ENCODE measurements at regions of chr12 and their contacts with region 1.

Region 1: GRCh38 chr12:113174461-113175384 is 10.6 kb downstream of the DDX54 start:
- DNase-seq: peak; percentile 55 to 85 (median 76)
- ATAC-seq: peak; percentile 95
- H3K4me3 ChIP-seq: no peak overlapping the region
- H3K4me3 Mint-ChIP-seq: no peak overlapping the region
- H3K27ac ChIP-seq: no peak overlapping the region
- H3K27ac Mint-ChIP-seq: no peak overlapping the region
- H3K4me1 ChIP-seq: no peaks in the 10 kb centered on the region
- H3K4me1 Mint-ChIP-seq: peaks cover 2% of the 10 kb centered on the region
- H3K27me3 ChIP-seq: no peaks in the 10 kb centered on the region
- H3K27me3 Mint-ChIP-seq: no peaks in the 10 kb centered on the region
- CTCF ChIP-seq: peak; percentile 96

Region 2: GRCh38 chr12:112900299-112901145 is 274.2 kb before region 1 on chr12:
- CTCF ChIA-PET with region 1: interaction called, 12 read pairs
- POLR2A ChIA-PET with region 1: no interaction called
- intact Hi-C with region 1: loop called (anchors 1 to 2 kb)
- DNase-seq: peak in 6 of 9 experiments; percentile 7 to 65 (median 35)
- ATAC-seq: peak; percentile 59
- H3K4me3 ChIP-seq: no peak overlapping the region
- H3K4me3 Mint-ChIP-seq: no peak overlapping the region
- H3K27ac ChIP-seq: no peak overlapping the region
- H3K27ac Mint-ChIP-seq: no peak overlapping the region
- H3K4me1 ChIP-seq: peaks cover 4% of the 10 kb centered on the region
- H3K4me1 Mint-ChIP-seq: peaks cover 22% of the 10 kb centered on the region
- H3K27me3 ChIP-seq: no peaks in the 10 kb centered on the region
- H3K27me3 Mint-ChIP-seq: peaks cover 7% of the 10 kb centered on the region
- CTCF ChIP-seq: peak; percentile 71

Region 3: DNA sequence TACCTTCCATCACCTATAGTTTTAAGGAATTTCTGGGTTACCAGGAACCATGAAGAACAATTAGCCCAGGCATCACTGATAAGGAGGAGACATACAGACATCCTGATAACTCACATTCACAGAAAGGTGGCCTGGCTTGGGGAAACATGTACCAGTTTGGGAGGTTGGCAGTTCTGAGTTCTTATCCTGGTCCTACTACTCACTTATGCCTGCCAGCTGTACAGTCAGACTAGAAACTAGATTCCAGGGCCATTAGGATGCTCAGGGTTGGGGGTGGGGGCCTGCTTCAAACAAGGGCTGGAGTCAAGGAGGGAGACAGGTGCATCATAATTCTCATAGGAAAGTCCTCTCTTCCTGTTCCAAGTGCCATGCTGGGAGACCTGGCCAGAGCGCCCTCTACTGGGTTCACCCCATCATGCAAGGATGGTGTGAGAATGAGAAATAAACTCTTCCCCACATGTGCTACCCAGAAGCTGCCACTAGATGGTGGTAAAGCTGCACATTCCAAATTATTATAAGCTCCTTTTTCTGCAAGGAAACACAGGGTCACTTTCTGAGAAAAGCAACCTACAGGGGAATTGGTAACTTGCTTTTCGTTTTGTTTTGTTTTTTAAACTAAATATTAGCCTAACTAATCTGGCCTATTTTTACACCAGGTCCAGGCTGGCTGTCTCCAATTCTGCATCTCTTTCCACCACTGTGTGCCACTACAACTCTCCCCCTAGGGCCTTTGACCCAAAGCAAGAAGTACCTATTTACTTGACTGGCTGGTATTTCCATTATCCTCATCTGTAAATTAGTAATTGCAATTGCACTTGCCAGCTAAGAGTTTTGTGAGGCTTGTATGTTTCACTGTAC is 182.0 kb before region 1 on chr12:
- CTCF ChIA-PET with region 1: interaction called, 4 read pairs
- POLR2A ChIA-PET with region 1: no interaction called
- intact Hi-C with region 1: loop called in 1 of 2 experiments (anchors 2 kb)
- DNase-seq: peak; percentile 25 to 70 (median 46)
- ATAC-seq: peak; percentile 79
- H3K4me3 ChIP-seq: no peak overlapping the region
- H3K4me3 Mint-ChIP-seq: no peak overlapping the region
- H3K27ac ChIP-seq: no peak overlapping the region
- H3K27ac Mint-ChIP-seq: no peak overlapping the region
- H3K4me1 ChIP-seq: peaks cover 9% of the 10 kb centered on the region
- H3K4me1 Mint-ChIP-seq: peaks cover 11% of the 10 kb centered on the region
- H3K27me3 ChIP-seq: no peaks in the 10 kb centered on the region
- H3K27me3 Mint-ChIP-seq: no peaks in the 10 kb centered on the region
- CTCF ChIP-seq: peak; percentile 74

Region 4: DNA sequence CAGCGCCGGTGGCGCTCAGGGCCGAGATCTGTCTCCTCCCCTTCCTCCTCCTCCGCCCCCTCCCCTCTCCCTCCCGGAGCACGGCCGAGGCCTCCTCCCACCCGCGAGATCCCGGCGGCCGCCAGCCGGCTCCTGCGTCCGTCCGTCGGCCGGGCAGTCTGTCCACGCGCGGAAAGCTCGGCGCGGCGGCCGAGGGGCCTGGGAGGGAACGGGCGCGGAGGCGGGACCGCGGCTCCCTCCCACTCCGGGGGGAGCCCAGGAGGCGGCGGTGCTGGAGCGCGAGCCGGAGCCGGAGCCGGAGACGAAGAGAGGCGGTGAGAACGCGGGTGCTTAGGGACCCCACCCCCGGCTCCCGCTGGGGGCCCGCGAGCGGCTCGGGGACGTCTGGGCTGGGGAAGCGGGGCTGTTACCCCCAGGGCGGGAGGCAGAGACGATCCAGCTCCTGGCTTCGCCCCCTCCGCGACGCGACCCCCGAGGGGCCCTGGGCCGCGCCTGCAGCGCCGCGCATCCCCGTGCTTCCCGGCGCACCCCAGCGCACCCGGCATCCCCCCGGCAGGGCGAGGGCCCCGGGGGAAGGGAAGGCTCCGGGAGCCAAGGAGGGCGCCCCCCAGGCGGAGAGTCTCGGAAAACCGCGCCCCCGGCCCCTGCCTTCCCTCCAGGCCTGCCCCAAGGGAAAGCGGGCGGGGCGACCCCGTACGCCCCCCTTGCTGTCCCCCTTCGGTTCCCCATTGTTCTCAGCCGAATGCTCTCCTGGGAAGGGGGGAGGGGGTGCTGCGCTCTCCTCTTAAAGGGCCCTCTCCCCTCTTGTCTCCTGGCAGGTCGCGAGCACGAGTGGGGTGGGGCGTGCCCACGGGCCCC is 117.9 kb before region 1 on chr12 and contains the start of gene DTX1:
- CTCF ChIA-PET with region 1: interaction called, 12 read pairs
- POLR2A ChIA-PET with region 1: no interaction called
- intact Hi-C with region 1: no loop called
- DNase-seq: peak in 6 of 9 experiments; percentile 20 to 57 (median 42)
- ATAC-seq: peak; percentile 75
- H3K4me3 ChIP-seq: peak within 1 kb of the TSS; percentile 52 to 57
- H3K4me3 Mint-ChIP-seq: peak within 1 kb of the TSS; percentile 83
- H3K27ac ChIP-seq: no peak within 1 kb of the TSS
- H3K27ac Mint-ChIP-seq: peak within 1 kb of the TSS; percentile 57
- H3K4me1 ChIP-seq: peaks cover 23% of the 10 kb centered on the region
- H3K4me1 Mint-ChIP-seq: peaks cover 27% of the 10 kb centered on the region
- H3K27me3 ChIP-seq: no peaks in the 10 kb centered on the region
- H3K27me3 Mint-ChIP-seq: no peaks in the 10 kb centered on the region
- CTCF ChIP-seq: no peak
- total RNA-seq, gene DTX1: 4.6 to 4.7 TPM

Region 5: GRCh38 chr12:113098446-113098896 is 76.3 kb before region 1 on chr12:
- CTCF ChIA-PET with region 1: interaction called, 12 read pairs
- POLR2A ChIA-PET with region 1: no interaction called
- intact Hi-C with region 1: loop called in 1 of 2 experiments (anchors 5 kb)
- DNase-seq: peak; percentile 35 to 78 (median 66)
- ATAC-seq: peak; percentile 93
- H3K4me3 ChIP-seq: no peak overlapping the region
- H3K4me3 Mint-ChIP-seq: no peak overlapping the region
- H3K27ac ChIP-seq: no peak overlapping the region
- H3K27ac Mint-ChIP-seq: peak overlapping the region; percentile 18
- H3K4me1 ChIP-seq: peaks cover 9% of the 10 kb centered on the region
- H3K4me1 Mint-ChIP-seq: peaks cover 13% of the 10 kb centered on the region
- H3K27me3 ChIP-seq: no peaks in the 10 kb centered on the region
- H3K27me3 Mint-ChIP-seq: no peaks in the 10 kb centered on the region
- CTCF ChIP-seq: peak; percentile 93

Region 6: DNA sequence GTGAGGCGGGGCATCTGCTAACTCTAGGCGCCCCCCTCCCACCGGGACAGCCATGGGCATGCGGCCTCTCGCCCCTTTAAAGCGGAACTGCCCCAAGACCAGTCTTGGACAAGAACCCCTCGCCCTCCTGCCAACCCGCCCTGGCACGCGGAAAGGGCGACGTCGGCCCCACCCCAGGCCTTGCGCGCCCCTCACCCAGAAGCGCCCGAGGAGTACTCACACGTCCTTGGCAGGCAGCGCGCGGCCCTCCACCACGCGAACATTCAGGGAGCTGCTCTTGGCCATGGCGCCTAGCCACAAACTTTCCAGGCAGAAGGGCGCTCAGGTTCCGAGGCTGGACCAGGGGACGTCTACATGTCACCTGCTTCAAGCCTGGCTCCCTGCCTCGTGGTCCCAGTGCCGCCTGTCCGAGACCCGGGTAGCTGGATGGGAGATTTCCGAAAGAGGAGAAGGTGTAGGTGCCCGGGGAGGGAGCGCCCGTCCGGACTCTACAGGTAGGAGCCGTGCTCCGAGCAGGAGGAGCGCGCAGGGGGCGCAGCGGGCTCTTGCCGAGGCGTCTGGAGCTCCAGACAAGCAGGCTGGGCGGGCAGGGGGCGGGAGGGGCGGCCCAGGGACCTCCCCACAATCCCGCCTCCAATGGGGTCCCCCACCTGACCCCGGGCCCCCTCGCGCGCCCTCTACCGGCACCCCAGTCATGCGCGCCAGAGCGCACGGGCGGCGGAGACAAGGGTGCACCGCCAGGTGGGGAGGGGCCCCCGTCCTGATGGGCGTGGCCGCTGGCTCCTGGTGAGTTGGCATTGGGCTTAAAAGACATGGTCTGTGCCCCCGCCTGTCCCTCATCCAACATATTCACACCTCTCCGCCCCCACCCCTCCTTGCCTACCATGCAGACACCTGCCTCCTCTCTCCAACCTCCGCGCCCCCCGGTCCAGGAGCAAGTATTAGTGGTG is 39.3 kb before region 1 on chr12 and contains the start of gene RASAL1:
- CTCF ChIA-PET with region 1: interaction called, 5 read pairs
- POLR2A ChIA-PET with region 1: no interaction called
- intact Hi-C with region 1: loop called in 1 of 2 experiments (anchors 2 kb)
- DNase-seq: peak; percentile 28 to 84 (median 59)
- ATAC-seq: peak; percentile 91
- H3K4me3 ChIP-seq: peak within 1 kb of the TSS; percentile 22 to 47
- H3K4me3 Mint-ChIP-seq: peak within 1 kb of the TSS; percentile 78
- H3K27ac ChIP-seq: peak within 1 kb of the TSS in 1 of 2 experiments; percentile 36
- H3K27ac Mint-ChIP-seq: peak within 1 kb of the TSS; percentile 92
- H3K4me1 ChIP-seq: peaks cover 12% of the 10 kb centered on the region
- H3K4me1 Mint-ChIP-seq: peaks cover 11% of the 10 kb centered on the region
- H3K27me3 ChIP-seq: no peaks in the 10 kb centered on the region
- H3K27me3 Mint-ChIP-seq: peaks cover 5% of the 10 kb centered on the region
- CTCF ChIP-seq: peak; percentile 54
- total RNA-seq, gene RASAL1: 2.3 to 2.8 TPM

Region 7: DNA sequence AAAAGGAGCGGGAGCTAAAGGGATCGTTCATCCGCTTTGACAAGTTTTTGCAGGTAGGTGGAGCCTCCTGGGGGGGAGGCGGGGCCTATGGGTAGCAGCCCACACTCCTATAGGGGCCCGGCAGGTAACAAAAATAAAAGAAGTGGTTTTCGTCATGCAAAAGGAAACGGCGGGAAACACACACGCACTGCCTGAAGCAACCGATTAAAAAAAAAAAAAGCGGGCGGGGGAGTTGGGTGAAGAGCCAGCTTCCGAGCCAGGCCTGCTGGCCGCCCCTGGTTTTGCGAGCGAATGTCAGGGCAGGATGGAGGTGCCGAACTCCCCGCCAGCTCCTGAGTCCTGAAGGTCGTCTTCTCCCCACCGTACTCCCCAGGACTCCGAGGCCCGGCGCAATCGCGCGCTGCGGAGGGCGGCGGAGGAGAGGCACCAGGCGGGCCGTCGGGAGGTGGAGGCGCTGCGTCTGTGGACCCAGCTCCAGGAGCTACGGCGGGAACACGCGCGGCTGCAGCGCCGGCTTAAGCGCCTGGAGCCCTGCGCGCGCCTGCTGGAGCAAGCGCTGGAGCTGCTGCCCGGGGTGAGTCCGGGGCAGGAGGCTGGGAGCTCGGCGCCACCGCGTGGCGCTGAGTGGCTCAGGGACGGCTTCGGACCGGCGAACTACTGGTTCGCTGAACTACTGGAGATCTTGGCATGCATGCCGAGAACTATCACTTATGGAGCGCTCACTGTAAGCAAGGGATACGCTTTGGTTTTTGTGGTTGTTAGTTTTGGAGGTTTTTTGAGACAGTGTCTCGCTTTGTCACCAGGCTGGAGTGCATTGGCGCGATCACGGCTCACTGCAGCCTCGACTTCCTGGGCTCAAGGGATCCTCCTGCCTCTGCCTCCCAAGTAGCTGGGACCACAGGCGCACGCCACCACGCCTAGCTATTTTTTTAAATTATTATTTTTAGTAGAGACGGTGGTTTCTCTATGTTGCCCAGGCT is 21.6 kb before region 1 on chr12:
- CTCF ChIA-PET with region 1: interaction called, 16 read pairs
- POLR2A ChIA-PET with region 1: no interaction called
- intact Hi-C with region 1: no loop called
- DNase-seq: peak; percentile 24 to 83 (median 61)
- ATAC-seq: peak; percentile 94
- H3K4me3 ChIP-seq: peak overlapping the region; percentile 45 to 55
- H3K4me3 Mint-ChIP-seq: peak overlapping the region; percentile 79
- H3K27ac ChIP-seq: no peak overlapping the region
- H3K27ac Mint-ChIP-seq: no peak overlapping the region
- H3K4me1 ChIP-seq: peaks cover 22% of the 10 kb centered on the region
- H3K4me1 Mint-ChIP-seq: peaks cover 23% of the 10 kb centered on the region
- H3K27me3 ChIP-seq: peaks cover 0 to 17% of the 10 kb centered on the region in 2 experiments
- H3K27me3 Mint-ChIP-seq: peaks cover 4% of the 10 kb centered on the region
- CTCF ChIP-seq: no peak

Region 8: DNA sequence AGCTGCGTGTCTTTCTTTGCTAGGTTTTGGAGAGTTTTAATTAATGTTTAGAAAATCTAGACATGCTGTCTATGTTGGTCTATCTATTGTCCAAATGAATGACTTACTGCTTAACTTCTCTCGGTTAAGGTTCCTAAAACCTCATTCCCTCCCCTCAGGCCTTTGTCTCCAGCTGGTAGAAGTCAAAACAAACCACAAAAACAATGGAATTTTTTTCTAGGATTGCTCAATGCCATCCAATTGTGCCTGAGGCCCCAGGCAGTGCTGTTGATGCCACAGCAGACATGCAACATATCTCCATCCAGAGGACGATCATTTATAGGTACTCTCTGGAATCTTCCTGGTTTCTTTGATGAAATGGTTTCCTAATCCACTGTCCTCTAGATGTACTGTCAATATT is 1957.4 kb after region 1 on chr12:
- CTCF ChIA-PET with region 1: no interaction called
- POLR2A ChIA-PET with region 1: no interaction called
- intact Hi-C with region 1: no loop called
- DNase-seq: no peak
- ATAC-seq: no peak
- H3K4me3 ChIP-seq: no peak overlapping the region
- H3K4me3 Mint-ChIP-seq: no peak overlapping the region
- H3K27ac ChIP-seq: no peak overlapping the region
- H3K27ac Mint-ChIP-seq: no peak overlapping the region
- H3K4me1 ChIP-seq: no peaks in the 10 kb centered on the region
- H3K4me1 Mint-ChIP-seq: no peaks in the 10 kb centered on the region
- H3K27me3 ChIP-seq: no peaks in the 10 kb centered on the region
- H3K27me3 Mint-ChIP-seq: no peaks in the 10 kb centered on the region
- CTCF ChIP-seq: no peak